Activated T-helper 1 cell treated with anti-CD3 and anti-CD28 coated beads, Interleukin-12 subunit alpha, Interleukin-12 subunit beta, Interleukin-2, Interleukin-4 antibody, amounts not matched to agents 30 ng/mL and 10 ng/mL and 1 ng/mL, durations not matched to agents 14 hours and 24 hours and 36 hours (primary cell): ENCODE measurements at regions of chr20 and their contacts with region 1.

Region 1: GRCh38 chr20:1185790-1186334 is 1.1 kb upstream of the TMEM74B start:
- DNase-seq: peak; percentile 43
- H3K4me3 Mint-ChIP-seq: peak overlapping the region; percentile 71
- H3K27ac Mint-ChIP-seq: no peak overlapping the region
- H3K4me1 Mint-ChIP-seq: peaks cover 6% of the 10 kb centered on the region
- H3K27me3 Mint-ChIP-seq: peaks cover 34% of the 10 kb centered on the region

Region 2: GRCh38 chr20:973785-974194 is 212.1 kb before region 1 on chr20:
- intact Hi-C with region 1: loop called (anchors 10 kb)
- DNase-seq: peak; percentile 11
- H3K4me3 Mint-ChIP-seq: no peak overlapping the region
- H3K27ac Mint-ChIP-seq: no peak overlapping the region
- H3K4me1 Mint-ChIP-seq: no peaks in the 10 kb centered on the region
- H3K27me3 Mint-ChIP-seq: peaks cover 5% of the 10 kb centered on the region

Region 3: GRCh38 chr20:1087311-1087905 is 98.5 kb before region 1 on chr20:
- intact Hi-C with region 1: no loop called
- DNase-seq: no peak
- H3K4me3 Mint-ChIP-seq: no peak overlapping the region
- H3K27ac Mint-ChIP-seq: no peak overlapping the region
- H3K4me1 Mint-ChIP-seq: peaks cover 11% of the 10 kb centered on the region
- H3K27me3 Mint-ChIP-seq: no peaks in the 10 kb centered on the region

Region 4: GRCh38 chr20:1108437-1108920 is 77.4 kb before region 1 on chr20:
- intact Hi-C with region 1: loop called (anchors 1 kb)
- DNase-seq: peak; percentile 25
- H3K4me3 Mint-ChIP-seq: no peak overlapping the region
- H3K27ac Mint-ChIP-seq: no peak overlapping the region
- H3K4me1 Mint-ChIP-seq: peaks cover 5% of the 10 kb centered on the region
- H3K27me3 Mint-ChIP-seq: peaks cover 5% of the 10 kb centered on the region